Activated CD4-positive, alpha-beta memory T cell treated with anti-CD3 and anti-CD28 coated beads, Interleukin-2, amount 10 ng/mL, durations not matched to agents 7 days and 5 days (primary cell): ENCODE measurements at regions of chr2 and their contacts with region 1.

Region 1: DNA sequence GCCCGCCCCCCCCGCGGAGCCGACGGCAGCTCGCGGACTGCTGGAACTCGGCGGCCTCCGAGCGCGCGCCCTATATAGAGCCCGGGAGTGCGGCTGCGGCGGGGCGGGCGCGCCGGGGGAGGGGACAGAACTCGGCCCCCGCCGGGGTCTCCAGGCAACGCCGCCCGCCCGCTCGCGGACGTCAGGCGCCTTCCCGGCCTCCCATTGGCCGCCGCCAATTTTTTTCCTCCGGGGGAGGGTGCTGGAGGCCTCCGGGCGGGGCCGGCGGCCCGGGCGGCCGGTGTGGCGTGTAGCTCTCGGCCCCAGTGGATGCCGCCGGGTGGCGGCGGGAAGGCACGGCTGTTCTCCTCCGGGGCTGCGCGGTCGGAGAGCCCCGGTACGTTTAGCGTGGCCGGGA is at the start of gene ZFP36L2:
- DNase-seq: peak; percentile 97
- H3K4me3 Mint-ChIP-seq: peak within 1 kb of the TSS; percentile 99
- H3K27ac Mint-ChIP-seq: peak within 1 kb of the TSS; percentile 99
- H3K4me1 Mint-ChIP-seq: peaks cover 33% of the 10 kb centered on the region
- H3K27me3 Mint-ChIP-seq: no peaks in the 10 kb centered on the region
- total RNA-seq, gene ZFP36L2: 276 to 278 TPM

Region 2: DNA sequence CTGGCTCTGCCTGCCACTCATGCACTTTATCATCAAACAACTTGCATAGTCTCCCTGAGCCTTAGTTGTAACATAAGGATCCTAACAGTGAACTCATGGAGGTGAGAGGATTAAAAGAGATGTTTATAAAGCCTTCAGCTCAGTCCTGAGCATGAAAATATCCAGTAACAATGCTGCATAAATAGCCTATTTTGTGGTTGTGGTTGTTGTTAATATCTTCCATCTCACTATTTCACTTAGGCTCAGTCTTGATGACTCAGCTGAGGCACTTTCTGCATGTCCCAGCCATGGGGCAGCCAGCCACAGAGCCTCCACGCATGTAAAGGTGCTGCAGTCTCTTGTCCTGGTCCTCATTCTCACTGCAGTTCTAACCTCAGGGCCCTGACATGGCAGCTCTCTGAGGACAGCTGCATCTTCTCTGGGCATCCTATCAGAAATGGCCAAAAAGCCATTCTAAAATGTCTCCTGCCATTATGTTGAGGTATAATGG is 1397.5 kb before region 1 on chr2:
- CTCF ChIA-PET with region 1: no interaction called
- POLR2A ChIA-PET with region 1: no interaction called
- DNase-seq: no peak
- H3K4me3 Mint-ChIP-seq: no peak overlapping the region
- H3K27ac Mint-ChIP-seq: no peak overlapping the region
- H3K4me1 Mint-ChIP-seq: no peaks in the 10 kb centered on the region
- H3K27me3 Mint-ChIP-seq: peaks cover 26% of the 10 kb centered on the region

Region 3: DNA sequence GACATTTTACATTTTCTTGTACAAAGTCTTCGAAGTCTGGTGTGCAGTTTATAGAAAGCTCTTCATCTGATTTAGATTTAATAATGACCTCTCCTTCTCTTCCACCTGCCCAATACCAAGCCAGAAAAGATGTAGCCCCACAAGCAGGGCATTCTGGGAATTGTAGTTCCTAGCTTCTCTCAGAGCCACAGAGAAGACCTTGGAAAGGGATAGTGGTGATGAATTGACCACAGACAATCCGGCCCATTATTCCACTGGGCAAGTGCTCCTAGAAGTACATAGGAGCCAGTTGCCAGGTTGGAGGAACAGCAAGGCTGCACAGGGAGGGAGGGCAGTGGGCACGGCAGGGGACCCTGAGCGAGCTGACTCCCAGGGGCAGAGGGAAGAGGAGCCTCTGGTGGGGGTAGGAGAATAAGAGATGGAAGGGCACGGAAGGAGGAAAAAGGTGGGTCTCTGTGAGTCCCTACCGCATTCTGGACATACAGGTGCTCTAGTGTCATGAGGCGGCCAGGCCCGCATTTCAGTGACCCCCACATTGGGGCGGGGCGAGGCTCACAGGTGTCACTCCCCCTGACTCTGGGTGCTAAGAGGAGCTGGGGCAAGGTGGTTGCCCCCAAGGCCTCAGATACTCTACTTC is 281.7 kb before region 1 on chr2:
- CTCF ChIA-PET with region 1: interaction called, 57 read pairs
- POLR2A ChIA-PET with region 1: interaction called, 6 read pairs
- DNase-seq: no peak
- H3K4me3 Mint-ChIP-seq: no peak overlapping the region
- H3K27ac Mint-ChIP-seq: no peak overlapping the region
- H3K4me1 Mint-ChIP-seq: no peaks in the 10 kb centered on the region
- H3K27me3 Mint-ChIP-seq: peaks cover 2% of the 10 kb centered on the region

Region 4: DNA sequence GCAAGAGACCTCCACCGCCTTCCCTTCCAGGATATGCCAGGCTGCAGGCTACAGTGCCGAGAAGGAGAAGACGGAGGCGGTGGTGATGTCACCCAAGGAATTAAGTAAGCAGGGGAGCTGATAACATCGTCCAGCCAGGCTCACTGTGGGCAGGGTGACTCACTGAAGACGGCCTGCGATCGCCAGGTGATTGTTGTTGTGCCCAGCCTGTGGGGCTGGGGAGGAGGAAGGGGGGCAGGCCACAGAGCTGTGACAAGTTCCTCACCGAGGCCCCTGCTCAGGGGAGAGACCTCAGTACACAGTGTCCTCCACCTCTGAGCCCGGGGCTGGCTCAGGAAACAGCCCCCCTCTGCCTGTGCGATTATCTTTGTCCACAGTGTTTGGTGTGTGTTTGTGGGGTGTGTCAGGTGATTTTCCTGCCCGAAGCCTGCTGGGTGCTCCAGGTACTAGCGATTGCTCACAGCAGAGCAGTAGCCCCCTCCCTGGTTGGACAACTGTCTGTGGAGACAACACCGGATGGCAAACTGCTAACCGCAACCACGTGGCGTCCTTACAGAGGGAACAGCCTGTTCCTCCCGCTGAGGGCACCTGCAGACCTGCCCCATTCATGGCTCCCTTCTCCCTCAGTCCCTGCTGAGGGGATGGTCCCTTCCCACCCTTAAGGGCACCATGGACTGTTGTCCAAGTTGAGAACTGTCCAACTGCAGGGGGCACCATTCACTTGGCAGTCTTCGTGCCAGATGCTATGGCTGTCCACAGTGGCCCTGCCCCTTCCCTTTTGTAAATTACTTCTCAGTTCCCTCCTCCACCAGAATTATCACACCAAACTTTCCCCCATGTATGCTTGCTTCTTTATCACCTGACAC is 95.3 kb before region 1 on chr2:
- CTCF ChIA-PET with region 1: interaction called, 316 read pairs
- POLR2A ChIA-PET with region 1: interaction called, 1,053 read pairs
- DNase-seq: peak; percentile 92
- H3K4me3 Mint-ChIP-seq: peak overlapping the region; percentile 48
- H3K27ac Mint-ChIP-seq: peak overlapping the region; percentile 99
- H3K4me1 Mint-ChIP-seq: peaks cover 92% of the 10 kb centered on the region
- H3K27me3 Mint-ChIP-seq: peaks cover under 1% of the 10 kb centered on the region

Region 5: DNA sequence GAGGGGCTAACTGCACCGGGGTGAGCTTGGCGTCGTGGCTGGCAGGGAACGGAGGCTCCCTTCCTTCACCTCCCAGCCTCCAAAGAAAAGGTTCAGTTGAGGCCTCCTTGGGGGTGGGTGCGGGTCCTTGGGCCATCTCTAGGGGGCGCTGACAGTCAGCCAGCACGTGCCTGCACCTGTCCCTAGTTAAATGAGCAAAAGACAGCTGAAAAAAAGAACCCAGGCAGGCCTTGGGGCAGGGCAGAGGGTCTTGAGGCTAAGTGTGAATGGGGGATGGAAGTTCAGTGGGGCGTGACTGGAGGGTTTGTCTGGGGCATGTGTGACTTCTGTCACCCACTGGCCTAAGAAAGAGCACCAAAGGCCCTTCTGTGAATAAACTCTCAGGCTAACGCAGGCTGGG is 56.6 kb before region 1 on chr2:
- CTCF ChIA-PET with region 1: interaction called, 230 read pairs
- POLR2A ChIA-PET with region 1: interaction called, 403 read pairs
- DNase-seq: peak; percentile 77
- H3K4me3 Mint-ChIP-seq: no peak overlapping the region
- H3K27ac Mint-ChIP-seq: peak overlapping the region; percentile 94
- H3K4me1 Mint-ChIP-seq: peaks cover 68% of the 10 kb centered on the region
- H3K27me3 Mint-ChIP-seq: no peaks in the 10 kb centered on the region

Region 6: DNA sequence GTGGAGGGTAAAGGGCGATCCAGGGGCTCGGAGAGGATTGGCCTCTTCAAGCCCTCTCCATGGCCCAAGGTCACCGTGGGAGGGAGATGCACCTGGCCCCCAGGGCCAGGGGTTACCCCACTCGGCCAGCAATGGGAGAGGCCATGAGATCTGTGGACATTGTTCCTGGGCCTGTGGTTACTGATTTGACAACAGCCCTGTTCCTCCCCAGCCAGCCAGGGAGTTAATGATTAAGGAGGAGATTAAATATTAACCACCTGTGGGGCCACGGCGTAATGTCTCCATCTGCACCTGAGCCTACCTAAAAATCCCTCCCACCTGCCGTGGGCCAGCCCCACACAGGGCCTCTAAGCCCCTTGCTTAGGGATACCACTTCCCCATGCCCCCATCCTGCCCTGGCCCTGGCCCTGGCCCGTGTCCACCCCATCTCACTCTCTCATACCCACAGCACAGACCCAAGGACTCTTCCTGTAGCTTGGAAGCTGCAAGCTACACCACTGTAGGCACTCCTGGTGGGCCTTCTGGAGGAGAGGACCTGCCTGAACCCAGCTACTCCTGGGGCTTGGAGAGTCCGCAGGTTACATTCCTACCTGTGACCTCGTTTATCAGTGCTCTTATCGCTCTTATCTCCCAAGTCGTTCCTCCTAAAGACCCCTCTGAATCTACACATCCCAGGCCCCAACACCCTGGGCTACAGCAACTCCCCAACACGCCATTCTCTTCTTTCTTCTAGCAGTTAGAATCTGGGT is 32.3 kb before region 1 on chr2:
- CTCF ChIA-PET with region 1: interaction called, 13 read pairs
- POLR2A ChIA-PET with region 1: interaction called, 80 read pairs
- DNase-seq: no peak
- H3K4me3 Mint-ChIP-seq: peak overlapping the region; percentile 72
- H3K27ac Mint-ChIP-seq: peak overlapping the region; percentile 94
- H3K4me1 Mint-ChIP-seq: peaks cover 54% of the 10 kb centered on the region
- H3K27me3 Mint-ChIP-seq: no peaks in the 10 kb centered on the region

Region 7: GRCh38 chr2:43542285-43542937 is 315.9 kb after region 1 on chr2:
- CTCF ChIA-PET with region 1: interaction called, 11 read pairs
- POLR2A ChIA-PET with region 1: interaction called, 3 read pairs
- DNase-seq: no peak
- H3K4me3 Mint-ChIP-seq: no peak overlapping the region
- H3K27ac Mint-ChIP-seq: no peak overlapping the region
- H3K4me1 Mint-ChIP-seq: peaks cover 20% of the 10 kb centered on the region
- H3K27me3 Mint-ChIP-seq: no peaks in the 10 kb centered on the region